ENCODE measurements at regions of chr10 and their contacts with region 1.

Region 1: DNA sequence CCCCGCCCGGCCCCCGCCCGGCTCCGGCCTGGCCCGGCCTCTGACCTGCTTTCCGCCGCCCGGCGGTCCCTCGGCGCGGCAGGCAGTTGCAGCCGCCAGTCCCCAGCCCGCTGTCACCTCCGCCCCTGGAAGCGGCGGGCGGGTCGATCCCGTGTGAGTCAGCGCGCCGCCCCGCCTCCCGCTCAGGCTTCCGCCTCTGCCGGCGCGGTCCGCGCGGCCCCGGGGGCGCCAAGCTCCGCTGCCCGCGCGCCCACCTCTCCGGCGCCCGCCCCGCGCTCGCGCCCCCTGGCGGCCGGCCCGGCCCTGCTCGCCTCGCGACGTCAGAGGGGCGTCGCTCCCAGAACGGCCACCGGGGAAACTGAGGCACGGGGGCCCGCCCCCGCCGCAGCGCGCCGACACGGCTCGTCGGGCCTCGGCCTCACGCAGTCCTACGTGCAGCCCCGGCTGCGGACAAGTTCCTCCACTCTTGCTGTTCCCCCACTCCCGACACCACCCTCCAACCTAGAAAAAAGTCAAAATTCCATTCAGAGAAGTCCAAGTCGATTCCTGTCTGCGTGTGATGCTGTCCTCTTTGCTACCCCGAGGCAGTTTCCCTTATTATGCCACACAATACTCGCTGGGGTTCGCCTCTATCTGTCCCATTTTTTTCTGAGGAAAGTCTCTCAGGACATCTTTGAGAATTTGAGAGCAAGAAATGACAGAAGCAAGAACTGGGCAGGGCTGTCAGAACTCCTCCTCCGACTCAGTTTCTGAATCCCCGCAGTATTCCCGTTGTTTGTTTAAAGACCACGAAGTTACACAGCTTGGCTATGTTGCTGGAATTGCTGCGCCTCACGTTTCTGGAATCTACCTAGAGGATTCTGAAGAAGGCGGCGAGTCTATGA is at the start of gene DNMBP:
- DNase-seq: no peak
- H3K4me3 ChIP-seq: peak within 1 kb of the TSS; percentile 74
- H3K27me3 ChIP-seq: no peaks in the 10 kb centered on the region
- CTCF ChIP-seq: no peak; the same call in 1 of the 2 replicates
- polyA plus RNA-seq, gene DNMBP: 16.3 and 16.7 TPM in 2 replicates

Region 2: DNA sequence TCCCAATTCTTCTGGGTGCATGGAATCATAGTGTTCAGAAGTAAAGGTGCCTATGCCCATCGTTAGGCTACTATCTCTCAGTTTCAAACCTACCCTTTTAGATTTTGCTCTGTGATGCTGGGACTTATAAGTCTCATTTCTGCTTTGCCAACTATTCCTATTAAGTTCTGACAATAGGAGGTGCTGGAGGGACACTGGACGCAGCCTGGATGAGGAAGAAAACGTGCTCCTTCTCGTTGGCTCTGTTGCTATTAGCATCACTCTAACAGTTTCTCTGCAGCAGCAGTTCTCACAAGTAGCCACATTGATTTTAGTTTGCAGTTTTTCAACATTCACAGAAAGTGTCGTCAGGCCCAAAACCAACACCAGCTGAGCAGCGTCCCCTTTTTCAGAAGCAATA is 155.2 kb before region 1 on chr10:
- CTCF ChIA-PET with region 1: interaction called, 13 read pairs
- POLR2A ChIA-PET with region 1: no interaction called
- DNase-seq: peak; percentile 41
- H3K4me3 ChIP-seq: no peak overlapping the region
- H3K27me3 ChIP-seq: no peaks in the 10 kb centered on the region
- CTCF ChIP-seq: peak; percentile 75

Region 3: GRCh38 chr10:99976886-99977665 is 33.0 kb before region 1 on chr10:
- CTCF ChIA-PET with region 1: interaction called, 22 read pairs
- POLR2A ChIA-PET with region 1: no interaction called
- DNase-seq: peak; percentile 89
- H3K4me3 ChIP-seq: no peak overlapping the region
- H3K27me3 ChIP-seq: no peaks in the 10 kb centered on the region
- CTCF ChIP-seq: no peak

Region 4: DNA sequence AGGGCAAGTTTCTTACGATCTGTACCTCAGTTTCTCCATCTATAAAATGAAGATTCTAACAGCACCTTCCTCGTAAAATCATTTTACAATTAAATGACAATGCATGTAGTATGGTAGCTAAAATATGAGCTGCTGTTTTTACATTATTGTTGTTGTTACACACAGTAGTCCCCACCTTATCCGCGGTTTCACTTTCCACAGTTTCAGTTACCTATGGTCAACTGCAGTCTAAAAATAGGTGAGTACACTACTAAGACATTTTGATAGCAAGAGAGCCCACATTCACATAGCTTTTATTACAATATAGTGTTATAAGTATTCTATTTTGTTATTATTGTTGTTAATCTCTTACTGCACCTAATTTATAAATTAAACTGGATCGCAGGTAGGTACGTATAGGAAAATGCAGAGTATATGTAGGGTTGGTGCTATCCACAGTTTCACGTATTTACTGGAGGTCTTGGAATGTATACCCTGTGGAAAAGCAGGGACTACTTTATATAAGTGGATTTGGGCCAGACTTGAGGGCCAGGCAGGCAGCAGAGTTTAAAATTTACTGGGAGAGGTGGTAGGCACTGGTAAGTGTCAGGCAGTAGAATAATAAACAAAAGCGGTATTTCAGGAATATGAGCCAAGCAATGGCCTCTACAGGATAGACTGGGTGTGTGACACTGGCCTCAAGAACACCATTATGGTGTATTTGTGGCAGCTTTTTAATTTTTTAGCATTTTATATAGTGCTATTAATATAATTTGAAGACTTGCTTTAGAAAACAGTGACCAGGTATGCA is 10.5 kb before region 1 on chr10:
- CTCF ChIA-PET with region 1: interaction called, 11 read pairs
- POLR2A ChIA-PET with region 1: no interaction called
- DNase-seq: no peak
- H3K4me3 ChIP-seq: no peak overlapping the region
- H3K27me3 ChIP-seq: no peaks in the 10 kb centered on the region
- CTCF ChIP-seq: no peak

Region 5: GRCh38 chr10:100025576-100025975 is 15.5 kb after region 1 on chr10:
- CTCF ChIA-PET with region 1: interaction called, 25 read pairs
- POLR2A ChIA-PET with region 1: no interaction called
- DNase-seq: peak; percentile 17
- H3K4me3 ChIP-seq: no peak overlapping the region
- H3K27me3 ChIP-seq: no peaks in the 10 kb centered on the region
- CTCF ChIP-seq: no peak